Activated T-helper 2 cell treated with anti-CD3 and anti-CD28 coated beads, Interferon-gamma antibody, Interleukin-2, Interleukin-4, amounts not matched to agents 10 μg/mL and 5 μg/mL and 100 μg/mL, durations not matched to agents 14 hours and 24 hours and 36 hours (primary cell): ENCODE measurements at regions of chrX and their contacts with region 1.

Region 1: DNA sequence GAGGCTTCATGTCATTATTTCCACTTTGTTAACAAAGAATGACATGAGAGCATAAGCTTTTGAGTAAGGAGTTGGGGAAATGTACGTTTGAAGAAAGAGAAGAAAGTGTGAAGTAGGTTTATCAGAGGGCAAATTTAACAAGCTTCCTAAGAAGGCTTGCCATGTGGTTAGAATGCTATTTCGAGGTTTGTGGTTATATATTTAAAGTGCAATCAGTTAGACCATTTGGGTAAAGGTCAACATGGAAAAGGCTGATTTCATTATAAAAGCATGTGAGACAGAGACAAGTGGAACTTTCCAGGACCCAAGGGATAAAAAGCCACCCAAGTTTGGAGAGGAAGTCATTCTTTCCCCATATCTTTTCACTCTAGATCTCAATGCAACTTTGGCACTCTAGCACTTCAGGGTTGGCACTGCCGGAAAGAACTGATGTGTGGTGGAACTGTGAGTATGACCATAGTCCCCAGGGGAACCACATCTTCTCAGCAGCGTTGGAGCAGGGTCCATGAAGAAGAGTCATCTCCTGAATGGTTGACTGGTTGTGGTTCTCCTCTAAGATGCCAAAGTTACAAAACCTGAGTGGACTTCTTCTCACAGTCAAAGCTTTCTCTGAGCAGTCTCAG is 529.9 kb downstream of the MID1IP1 start:
- DNase-seq: no peak
- H3K4me3 Mint-ChIP-seq: peak overlapping the region; percentile 17
- H3K27ac Mint-ChIP-seq: peak overlapping the region; percentile 97
- H3K4me1 Mint-ChIP-seq: peaks cover 71% of the 10 kb centered on the region
- H3K27me3 Mint-ChIP-seq: no peaks in the 10 kb centered on the region

Region 2: DNA sequence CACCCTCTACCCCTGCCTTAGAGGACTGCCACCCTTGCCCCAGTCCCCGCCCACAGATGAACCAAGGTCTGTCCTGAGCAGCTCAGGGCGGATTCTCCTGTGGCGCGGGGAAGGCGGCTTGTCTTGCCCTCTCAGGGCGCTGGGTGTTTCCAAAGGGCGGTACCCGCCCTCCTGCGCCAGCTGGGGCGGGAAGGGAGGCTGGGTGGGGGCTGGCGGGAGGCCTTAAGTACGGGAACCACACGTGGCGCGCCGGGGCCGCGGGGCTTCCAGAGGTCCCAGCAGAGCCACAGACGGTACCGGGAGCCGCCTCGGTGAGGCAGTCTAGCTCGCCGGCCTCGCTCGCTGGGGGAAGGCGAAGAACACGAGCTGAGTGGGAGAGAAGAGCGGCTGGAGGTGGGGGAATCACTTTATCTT is 168.9 kb before region 1 on chrX:
- intact Hi-C with region 1: loop called (anchors 2 kb)
- DNase-seq: peak; percentile 24
- H3K4me3 Mint-ChIP-seq: peak overlapping the region; percentile 56
- H3K27ac Mint-ChIP-seq: peak overlapping the region; percentile 98
- H3K4me1 Mint-ChIP-seq: peaks cover 65% of the 10 kb centered on the region
- H3K27me3 Mint-ChIP-seq: no peaks in the 10 kb centered on the region

Region 3: GRCh38 chrX:39296472-39296871 is 34.7 kb before region 1 on chrX:
- intact Hi-C with region 1: loop called (anchors 5 kb)
- DNase-seq: no peak
- H3K4me3 Mint-ChIP-seq: no peak overlapping the region
- H3K27ac Mint-ChIP-seq: no peak overlapping the region
- H3K4me1 Mint-ChIP-seq: peaks cover 31% of the 10 kb centered on the region
- H3K27me3 Mint-ChIP-seq: no peaks in the 10 kb centered on the region

Region 4: DNA sequence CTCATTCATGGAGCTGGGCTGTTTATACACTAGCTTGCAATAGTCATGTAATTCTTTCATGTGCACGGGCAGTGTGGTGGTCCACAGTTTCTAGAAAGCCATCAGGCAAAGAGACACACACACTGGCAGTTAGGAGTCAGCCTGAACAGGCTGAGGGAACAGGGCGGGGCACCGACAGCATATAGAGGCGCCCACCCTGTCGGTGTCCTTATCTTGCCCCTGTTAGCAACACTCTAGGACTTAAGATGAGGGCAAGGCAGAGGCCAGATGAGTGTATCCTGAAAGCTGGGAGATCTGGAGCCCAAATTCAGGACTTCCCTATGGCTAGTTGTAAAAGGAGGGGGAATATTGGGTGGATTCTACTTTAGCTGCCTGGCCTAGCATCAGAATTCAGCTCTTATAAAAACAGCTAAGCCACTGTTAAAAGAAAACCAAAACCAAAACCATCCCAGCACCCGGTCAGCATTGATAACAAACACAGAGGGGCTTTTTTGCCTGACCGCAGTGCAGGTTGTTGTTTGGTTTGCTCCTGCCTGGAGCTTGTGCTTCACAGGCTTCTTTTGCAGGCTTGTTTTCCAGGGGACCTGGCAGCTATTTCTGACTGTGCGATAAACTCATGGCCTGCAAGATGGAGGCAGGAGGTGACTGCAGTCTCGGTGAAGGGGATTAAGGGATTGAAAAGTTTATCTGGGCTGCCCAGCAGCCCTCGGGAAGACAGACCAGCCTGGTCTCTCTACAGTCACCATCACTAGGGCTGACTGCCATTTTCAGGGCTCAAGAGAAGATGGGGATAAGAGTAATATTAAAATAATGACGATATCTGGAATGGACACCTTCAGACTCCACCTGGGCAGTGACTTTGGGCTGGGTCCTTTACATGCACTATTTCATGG is 109.0 kb after region 1 on chrX:
- intact Hi-C with region 1: loop called (anchors 2 kb)
- DNase-seq: peak; percentile 11
- H3K4me3 Mint-ChIP-seq: peak overlapping the region; percentile 17
- H3K27ac Mint-ChIP-seq: peak overlapping the region; percentile 95
- H3K4me1 Mint-ChIP-seq: peaks cover 46% of the 10 kb centered on the region
- H3K27me3 Mint-ChIP-seq: no peaks in the 10 kb centered on the region

Region 5: DNA sequence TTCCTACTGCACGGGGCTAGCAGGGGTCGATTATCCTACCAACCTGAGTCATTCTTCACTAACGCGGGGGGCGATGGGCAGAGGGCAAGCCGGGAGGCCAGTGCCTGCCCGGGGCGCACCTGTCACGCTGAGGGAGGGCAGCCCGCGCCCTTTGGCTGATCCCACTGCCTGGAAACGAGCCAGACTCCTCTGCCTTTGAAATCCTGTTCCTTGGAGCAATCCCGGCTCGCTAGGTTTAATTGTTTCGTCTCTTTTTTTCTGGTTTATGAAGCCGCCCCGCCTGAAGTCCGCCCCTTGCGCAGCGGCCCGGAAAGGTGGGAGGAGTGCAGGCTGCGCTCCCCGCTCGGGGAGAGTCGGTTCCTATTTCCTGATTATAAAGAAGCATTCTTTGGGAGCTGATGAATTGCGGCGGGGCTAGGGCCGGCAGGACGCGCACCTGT is 282.3 kb after region 1 on chrX:
- intact Hi-C with region 1: loop called (anchors 1 kb)
- DNase-seq: no peak
- H3K4me3 Mint-ChIP-seq: peak overlapping the region; percentile 85
- H3K27ac Mint-ChIP-seq: peak overlapping the region; percentile 88
- H3K4me1 Mint-ChIP-seq: peaks cover 38% of the 10 kb centered on the region
- H3K27me3 Mint-ChIP-seq: no peaks in the 10 kb centered on the region